Left cardiac atrium (tissue), 4 donors: ENCODE measurements at regions of chr2 and their contacts with region 1.

Region 1: DNA sequence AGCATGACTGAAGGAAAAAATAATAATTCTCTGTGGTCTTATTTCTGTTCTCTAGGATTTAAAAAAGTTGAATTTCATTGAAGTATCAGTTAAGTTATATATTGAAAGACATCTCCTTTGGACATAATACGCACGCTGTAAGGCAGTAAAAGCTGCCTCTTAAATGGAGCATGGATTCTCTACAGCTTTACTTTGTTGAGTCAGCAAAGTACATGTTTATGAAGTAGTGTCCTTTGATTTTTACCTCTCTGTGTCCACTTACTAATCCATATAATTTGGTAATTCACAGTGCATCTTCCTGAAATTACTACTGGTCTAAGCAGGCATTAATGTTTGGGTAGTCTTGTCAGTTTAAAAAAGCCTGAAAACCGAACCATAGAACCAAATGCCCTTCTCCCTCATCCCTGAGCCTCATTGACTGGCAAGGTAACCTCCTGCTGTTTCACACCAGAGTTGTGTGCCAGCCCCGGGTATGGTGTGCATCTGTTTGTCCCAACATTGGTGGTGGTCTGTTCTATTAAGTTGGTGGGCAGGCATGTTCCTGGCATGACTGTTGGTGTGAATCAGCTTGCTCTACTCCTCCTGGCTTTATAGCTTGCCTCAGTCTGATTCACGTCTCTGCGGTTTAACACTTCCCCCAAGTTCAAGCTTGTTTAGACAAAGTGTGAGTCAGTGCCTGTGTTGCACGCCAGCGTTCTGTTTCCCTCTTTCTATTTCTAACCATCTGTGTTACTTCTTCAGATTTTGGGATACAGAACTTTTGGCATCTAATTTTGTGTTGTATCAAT is 71.0 kb upstream of the ITM2C start:
- DNase-seq: peak; percentile 64
- ATAC-seq: peak; percentile 85 to 93

Region 2: DNA sequence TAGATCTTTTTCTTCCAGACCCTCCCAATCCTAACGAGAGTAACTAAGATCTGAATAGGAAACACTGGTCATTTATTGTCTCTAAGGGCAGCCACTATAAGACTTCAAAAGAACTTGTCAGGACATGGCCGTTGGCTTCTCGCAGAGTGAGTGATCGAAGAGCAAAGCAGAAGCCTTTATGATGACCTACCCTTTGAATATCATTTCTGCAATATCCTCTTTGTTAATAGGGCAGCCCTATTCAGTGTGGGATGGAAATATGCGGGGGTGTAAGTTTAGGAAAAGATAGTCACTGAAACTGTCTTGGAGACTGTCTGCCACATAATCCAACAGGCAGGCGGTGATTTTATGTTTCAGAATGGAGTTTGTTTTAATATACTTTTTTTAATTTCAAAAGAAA is 800.5 kb before region 1 on chr2:
- intact Hi-C with region 1: loop called in 1 of 2 experiments (anchors 5 kb)
- DNase-seq: no peak
- ATAC-seq: no peak